ENCODE measurements at regions of chr1 and their contacts with region 1.

Region 1: DNA sequence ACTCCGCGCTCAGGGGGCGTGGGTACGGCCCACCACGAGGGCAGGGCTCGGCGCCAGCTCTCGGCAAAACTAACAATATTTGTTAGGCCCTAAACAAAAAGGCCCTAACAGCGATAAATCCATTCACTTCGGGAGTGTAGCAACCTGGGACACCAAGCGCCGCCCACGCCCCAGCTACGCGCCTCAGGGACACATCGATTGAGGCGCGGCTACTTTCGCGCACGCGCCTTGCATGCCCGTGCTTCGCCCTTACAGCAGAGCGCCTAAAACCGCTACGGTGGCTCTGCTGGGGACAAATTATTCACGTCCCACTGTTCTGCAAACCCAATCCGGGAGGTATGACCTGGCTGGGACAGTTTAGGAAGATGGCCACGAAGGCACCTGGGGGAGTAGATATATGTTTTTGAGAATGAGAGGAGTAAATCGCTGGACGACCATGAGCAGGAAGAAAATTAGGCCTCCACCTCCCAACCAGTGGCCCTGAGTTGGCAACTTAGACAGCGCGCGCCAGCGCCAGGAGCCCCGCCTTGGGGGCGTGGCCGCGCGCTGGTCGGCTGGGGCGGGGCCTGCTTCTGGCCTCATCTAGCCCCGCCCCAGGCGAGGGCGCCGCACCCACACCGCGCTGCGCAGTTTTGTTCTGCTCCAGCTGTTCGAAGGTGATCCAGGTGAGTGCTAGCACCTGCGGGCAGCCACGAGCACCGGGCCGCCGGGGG is at the start of gene MGST3:
- DNase-seq: peak; percentile 97
- H3K4me3 Mint-ChIP-seq: no peak within 1 kb of the TSS
- H3K27ac Mint-ChIP-seq: no peak within 1 kb of the TSS
- H3K4me1 Mint-ChIP-seq: peaks cover 19% of the 10 kb centered on the region
- H3K27me3 Mint-ChIP-seq: no peaks in the 10 kb centered on the region
- total RNA-seq, gene MGST3: 26.6 to 29.2 TPM

Region 2: GRCh38 chr1:165679282-165680036 is 48.7 kb after region 1 on chr1:
- CTCF ChIA-PET with region 1: no interaction called
- intact Hi-C with region 1: loop called (anchors 2 kb)
- DNase-seq: peak; percentile 11
- H3K4me3 Mint-ChIP-seq: no peak overlapping the region
- H3K27ac Mint-ChIP-seq: peak overlapping the region; percentile 62
- H3K4me1 Mint-ChIP-seq: peaks cover 24% of the 10 kb centered on the region
- H3K27me3 Mint-ChIP-seq: no peaks in the 10 kb centered on the region

Region 3: GRCh38 chr1:166838766-166839599 is 1208.2 kb after region 1 on chr1 and contains the start of gene POGK:
- CTCF ChIA-PET with region 1: no interaction called
- intact Hi-C with region 1: loop called (anchors 10 kb)
- DNase-seq: peak; percentile 91
- H3K4me3 Mint-ChIP-seq: peak within 1 kb of the TSS; percentile 95
- H3K27ac Mint-ChIP-seq: peak within 1 kb of the TSS; percentile 96
- H3K4me1 Mint-ChIP-seq: peaks cover 46% of the 10 kb centered on the region
- H3K27me3 Mint-ChIP-seq: no peaks in the 10 kb centered on the region
- total RNA-seq, gene POGK: 33.1 to 34.9 TPM

Region 4: GRCh38 chr1:167105271-167106118 is 1474.7 kb after region 1 on chr1:
- CTCF ChIA-PET with region 1: no interaction called
- intact Hi-C with region 1: loop called (anchors 10 kb)
- DNase-seq: no peak
- H3K4me3 Mint-ChIP-seq: no peak overlapping the region
- H3K27ac Mint-ChIP-seq: peak overlapping the region; percentile 42
- H3K4me1 Mint-ChIP-seq: peaks cover 56% of the 10 kb centered on the region
- H3K27me3 Mint-ChIP-seq: no peaks in the 10 kb centered on the region

Region 5: DNA sequence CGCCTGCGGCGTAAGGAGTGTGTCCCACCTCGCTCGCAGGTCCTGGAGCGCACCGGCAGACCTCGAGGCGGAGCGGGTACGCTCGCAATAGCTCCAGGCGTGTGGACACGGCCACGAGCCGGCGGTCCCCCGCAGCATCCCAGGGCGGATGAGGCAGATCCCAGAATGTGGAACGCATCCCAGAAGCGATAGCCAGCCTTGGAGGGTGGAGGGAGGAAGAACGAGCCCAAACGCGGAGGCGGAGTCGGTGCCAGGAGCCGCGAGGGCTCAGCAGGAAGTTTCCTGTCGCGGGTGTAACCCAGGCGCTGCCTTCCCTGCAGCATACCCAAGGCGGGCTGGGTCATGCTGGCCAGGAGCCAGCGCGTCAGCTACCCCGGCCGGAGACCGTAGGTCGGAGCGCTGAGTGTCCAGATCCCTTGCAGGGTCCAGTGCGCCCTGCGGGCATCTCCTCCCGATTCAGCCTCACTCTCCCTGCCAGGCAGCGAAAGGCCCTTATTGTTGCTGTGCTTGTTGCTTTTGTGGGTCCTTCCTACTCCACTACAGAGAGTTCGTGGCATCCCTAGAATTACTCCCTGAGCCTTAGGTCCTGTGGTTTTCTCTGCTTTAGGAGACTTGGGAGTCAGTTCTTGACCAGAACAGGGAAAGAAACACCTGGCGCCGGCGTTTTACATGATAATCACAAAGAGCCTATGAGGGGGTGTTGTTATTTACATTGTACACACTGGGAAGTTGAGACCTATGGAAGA is 1490.8 kb after region 1 on chr1:
- CTCF ChIA-PET with region 1: no interaction called
- intact Hi-C with region 1: no loop called
- DNase-seq: peak; percentile 58
- H3K4me3 Mint-ChIP-seq: peak overlapping the region; percentile 81
- H3K27ac Mint-ChIP-seq: no peak overlapping the region
- H3K4me1 Mint-ChIP-seq: peaks cover 3% of the 10 kb centered on the region
- H3K27me3 Mint-ChIP-seq: peaks cover 2% of the 10 kb centered on the region

Measured in activated naive CD4-positive, alpha-beta T cell treated with anti-CD3 and anti-CD28 coated beads for 36 hours (primary cell).